Caki2 (cell line): ENCODE measurements at regions of chr2 and their contacts with region 1.

Region 1: GRCh38 chr2:215920244-215921100 is 92.9 kb downstream of the MREG start:
- DNase-seq: peak; percentile 60

Region 2: GRCh38 chr2:215454519-215455246 is 465.8 kb before region 1 on chr2:
- in situ Hi-C with region 1: loop called (anchors 25 kb)
- DNase-seq: peak; percentile 40

Region 3: GRCh38 chr2:215758691-215759090 is 161.8 kb before region 1 on chr2:
- in situ Hi-C with region 1: no loop called
- DNase-seq: no peak

Region 4: GRCh38 chr2:215973954-215974702 is 53.7 kb after region 1 on chr2:
- in situ Hi-C with region 1: no loop called
- DNase-seq: no peak

Region 5: GRCh38 chr2:216013080-216013909 is 92.8 kb after region 1 on chr2 and contains the start of gene MREG:
- in situ Hi-C with region 1: no loop called
- DNase-seq: peak; percentile 66
- total RNA-seq, gene MREG: 9.7 and 12.0 TPM in 2 replicates

Region 6: GRCh38 chr2:216081487-216082116 is 161.1 kb after region 1 on chr2 and contains the starts of genes PECR and TMEM169:
- in situ Hi-C with region 1: no loop called
- DNase-seq: peak; percentile 68
- total RNA-seq, gene PECR: 50.7 and 52.9 TPM in 2 replicates
- total RNA-seq, gene TMEM169: 5.5 and 8.3 TPM in 2 replicates